GM12878 (cell line): ENCODE measurements at regions of chr12 and their contacts with region 1.

Region 1: GRCh38 chr12:668090-668481 is 4.8 kb upstream of the NINJ2 start:
- DNase-seq: no peak
- ATAC-seq: peak; percentile 27
- H3K4me3 ChIP-seq: no peak overlapping the region
- H3K27ac ChIP-seq: peak overlapping the region; percentile 87
- H3K4me1 ChIP-seq: peaks cover 76% of the 10 kb centered on the region
- H3K27me3 ChIP-seq: no peaks in the 10 kb centered on the region
- CTCF ChIP-seq: no peak
- EP300 ChIP-seq: no peak
- POLR2A ChIP-seq: no peak
- RAD21 ChIP-seq: no peak

Region 2: GRCh38 chr12:538731-539539 is 129.2 kb before region 1 on chr12:
- CTCF ChIA-PET with region 1: no interaction called
- POLR2A ChIA-PET with region 1: no interaction called
- RAD21 ChIA-PET with region 1: no interaction called
- SMC1A ChIA-PET with region 1: no interaction called
- in situ Hi-C with region 1: no loop called
- intact Hi-C with region 1: no loop called
- DNase-seq: no peak
- ATAC-seq: no peak
- H3K4me3 ChIP-seq: no peak overlapping the region
- H3K27ac ChIP-seq: no peak overlapping the region
- H3K4me1 ChIP-seq: no peaks in the 10 kb centered on the region
- H3K27me3 ChIP-seq: peaks cover 0 to 2% of the 10 kb centered on the region in 2 experiments; a peak in 3 of 4 replicates
- CTCF ChIP-seq: no peak
- EP300 ChIP-seq: no peak
- POLR2A ChIP-seq: no peak
- RAD21 ChIP-seq: no peak

Region 3: DNA sequence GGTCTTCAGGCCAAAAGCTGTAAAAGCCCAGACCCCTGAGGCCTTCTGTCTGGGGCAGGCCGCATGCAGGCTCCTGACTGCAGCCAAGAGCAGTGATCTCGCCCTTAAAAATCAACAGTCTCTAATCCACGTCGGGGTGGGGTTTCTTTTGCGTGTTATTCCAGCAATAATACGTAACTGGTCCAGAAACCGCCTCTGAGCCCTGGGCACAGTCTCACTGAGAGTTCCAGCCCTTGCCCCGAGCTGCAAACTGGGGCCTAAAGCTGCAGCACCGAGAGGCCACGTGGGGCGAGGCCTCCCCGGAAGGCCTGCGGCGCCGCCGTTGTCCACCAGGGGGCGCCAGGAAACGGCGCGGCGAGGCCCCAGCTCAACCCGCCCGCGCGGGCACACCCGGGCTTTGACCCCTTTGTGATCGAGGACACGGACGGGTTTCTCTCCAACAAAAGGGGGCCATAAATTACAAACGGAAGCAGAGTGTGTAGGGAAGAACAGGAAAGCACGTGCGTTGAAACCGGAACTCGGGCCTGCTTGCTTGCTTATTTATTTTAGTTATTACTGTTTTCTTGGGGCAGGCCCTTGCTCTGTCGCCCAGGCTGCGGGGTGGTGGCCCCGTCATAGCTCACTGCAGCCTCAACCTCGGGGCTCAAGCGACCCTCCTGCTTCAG is 92.0 kb before region 1 on chr12:
- CTCF ChIA-PET with region 1: interaction called, 14 read pairs
- POLR2A ChIA-PET with region 1: interaction called, 11 read pairs
- RAD21 ChIA-PET with region 1: interaction called, 27 read pairs
- SMC1A ChIA-PET with region 1: interaction called, 5 read pairs
- in situ Hi-C with region 1: no loop called
- intact Hi-C with region 1: no loop called
- DNase-seq: peak; percentile 40
- ATAC-seq: peak; percentile 99
- H3K4me3 ChIP-seq: no peak overlapping the region
- H3K27ac ChIP-seq: peak overlapping the region; percentile 26
- H3K4me1 ChIP-seq: peaks cover 10% of the 10 kb centered on the region
- H3K27me3 ChIP-seq: no peaks in the 10 kb centered on the region
- CTCF ChIP-seq: peak; percentile 90 to 99 (median 96)
- EP300 ChIP-seq: no peak
- POLR2A ChIP-seq: peak; percentile 59
- RAD21 ChIP-seq: peak; percentile 79

Region 4: GRCh38 chr12:642633-643474 is 25.2 kb before region 1 on chr12:
- CTCF ChIA-PET with region 1: interaction called, 7 read pairs
- POLR2A ChIA-PET with region 1: interaction called, 47 read pairs
- RAD21 ChIA-PET with region 1: interaction called, 49 read pairs
- SMC1A ChIA-PET with region 1: interaction called, 22 read pairs
- in situ Hi-C with region 1: no loop called
- intact Hi-C with region 1: loop called (anchors 1 kb)
- DNase-seq: no peak
- ATAC-seq: peak; percentile 82
- H3K4me3 ChIP-seq: peak overlapping the region; percentile 82
- H3K27ac ChIP-seq: peak overlapping the region; percentile 86
- H3K4me1 ChIP-seq: peaks cover 57% of the 10 kb centered on the region
- H3K27me3 ChIP-seq: no peaks in the 10 kb centered on the region
- CTCF ChIP-seq: peak; percentile 20 to 68 (median 34)
- EP300 ChIP-seq: 0 out of 4 replicates have a peak, but pooled peaks of 1 of the 2 experiments have one; percentile 11
- POLR2A ChIP-seq: peak; percentile 83
- RAD21 ChIP-seq: peak; percentile 21

Region 5: DNA sequence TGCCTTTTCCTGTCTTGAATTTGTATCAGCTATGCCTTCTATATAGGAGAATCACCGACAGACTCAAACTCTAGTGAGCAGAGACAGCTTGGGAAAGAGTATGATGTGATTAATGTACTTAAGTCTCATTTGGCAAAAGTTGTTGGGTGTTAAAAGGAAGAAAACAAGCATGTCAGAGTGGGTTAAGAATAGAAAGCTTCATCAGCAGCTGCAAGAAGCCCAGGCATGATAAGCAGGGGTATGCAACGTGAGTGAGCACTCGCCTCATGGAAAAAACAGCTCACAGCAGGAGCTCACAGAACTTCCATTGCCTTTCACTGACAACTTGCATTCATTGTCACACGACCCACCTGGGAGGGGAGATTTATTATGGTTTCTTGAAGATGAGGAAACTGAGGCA is 48.4 kb after region 1 on chr12:
- CTCF ChIA-PET with region 1: interaction called, 3 read pairs
- POLR2A ChIA-PET with region 1: interaction called, 9 read pairs
- RAD21 ChIA-PET with region 1: interaction called, 16 read pairs
- SMC1A ChIA-PET with region 1: interaction called, 12 read pairs
- in situ Hi-C with region 1: no loop called
- intact Hi-C with region 1: no loop called
- DNase-seq: no peak
- ATAC-seq: no peak
- H3K4me3 ChIP-seq: no peak overlapping the region
- H3K27ac ChIP-seq: no peak overlapping the region
- H3K4me1 ChIP-seq: peaks cover 24% of the 10 kb centered on the region
- H3K27me3 ChIP-seq: no peaks in the 10 kb centered on the region
- CTCF ChIP-seq: no peak
- EP300 ChIP-seq: no peak
- POLR2A ChIP-seq: no peak
- RAD21 ChIP-seq: no peak